ENCODE measurements at regions of chr22 and their contacts with region 1.

Region 1: DNA sequence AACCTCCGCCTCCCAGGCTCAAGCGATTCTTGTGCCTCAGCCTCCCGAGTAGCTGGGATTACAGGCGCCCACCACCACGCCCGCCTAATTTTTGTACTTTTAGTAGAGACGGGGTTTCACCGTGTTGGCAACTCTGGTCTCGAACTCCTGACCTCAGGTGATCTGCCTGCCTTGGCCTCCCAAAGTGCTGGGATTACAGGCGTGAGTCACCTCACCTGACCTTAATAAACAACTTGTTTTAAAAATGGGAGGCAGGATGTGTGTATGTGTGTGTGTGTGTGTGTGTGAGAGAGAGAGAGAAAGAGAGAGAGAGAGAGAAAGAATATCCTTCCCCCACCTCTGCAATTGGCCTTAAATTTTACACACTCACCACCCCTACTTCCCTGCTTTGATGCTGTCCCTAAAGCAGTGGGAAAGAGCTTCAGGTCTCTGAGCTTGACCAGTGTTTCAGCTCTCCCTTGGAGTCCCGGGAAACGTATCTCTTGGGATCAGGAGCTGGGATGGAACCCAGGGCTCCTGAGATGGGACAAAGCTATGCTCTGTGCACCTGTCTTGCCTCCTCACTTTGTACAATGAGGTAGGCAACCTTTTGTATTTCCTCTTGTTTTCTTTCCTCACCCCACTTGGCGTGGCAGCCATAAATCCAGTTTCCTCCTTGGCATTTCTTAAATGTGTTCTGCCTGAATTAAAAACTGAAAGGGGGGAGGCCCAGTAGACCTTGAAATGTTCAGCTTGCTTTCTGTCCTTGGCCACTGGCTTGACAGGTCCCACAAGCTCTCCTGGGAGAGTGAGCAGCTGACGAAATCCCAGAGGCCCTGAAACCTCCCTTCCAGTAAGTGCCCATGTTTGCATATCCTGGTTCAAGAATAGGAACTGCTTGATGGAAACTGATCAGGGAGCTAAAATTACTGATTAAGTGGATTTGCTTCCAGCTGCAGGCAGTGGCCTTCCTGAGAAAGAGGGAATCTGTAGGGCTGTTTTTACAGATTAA is 17.8 kb upstream of the XBP1 start:
- DNase-seq: no peak
- H3K4me3 ChIP-seq: no peak overlapping the region
- H3K27me3 ChIP-seq: no peaks in the 10 kb centered on the region
- CTCF ChIP-seq: no peak

Region 2: GRCh38 chr22:28829358-28830181 is 11.4 kb after region 1 on chr22:
- CTCF ChIA-PET with region 1: interaction called, 33 read pairs
- POLR2A ChIA-PET with region 1: no interaction called
- DNase-seq: no peak
- H3K4me3 ChIP-seq: no peak overlapping the region
- H3K27me3 ChIP-seq: no peaks in the 10 kb centered on the region
- CTCF ChIP-seq: peak; percentile 92

Region 3: GRCh38 chr22:28969401-28970168 is 151.4 kb after region 1 on chr22:
- CTCF ChIA-PET with region 1: no interaction called
- POLR2A ChIA-PET with region 1: no interaction called
- DNase-seq: no peak
- H3K4me3 ChIP-seq: no peak overlapping the region
- H3K27me3 ChIP-seq: no peaks in the 10 kb centered on the region
- CTCF ChIP-seq: no peak